Activated T-helper 1 cell treated with anti-CD3 and anti-CD28 coated beads, Interleukin-12 subunit alpha, Interleukin-12 subunit beta, Interleukin-2, Interleukin-4 antibody, amounts not matched to agents 30 ng/mL and 10 ng/mL and 1 ng/mL, durations not matched to agents 14 hours and 24 hours and 36 hours (primary cell): ENCODE measurements at regions of chr10 and their contacts with region 1.

Region 1: GRCh38 chr10:88901206-88901983 is 21.4 kb downstream of the STAMBPL1 start:
- DNase-seq: no peak
- H3K4me3 Mint-ChIP-seq: peak overlapping the region; percentile 73
- H3K27ac Mint-ChIP-seq: peak overlapping the region; percentile 89
- H3K4me1 Mint-ChIP-seq: peaks cover 68% of the 10 kb centered on the region
- H3K27me3 Mint-ChIP-seq: no peaks in the 10 kb centered on the region

Region 2: DNA sequence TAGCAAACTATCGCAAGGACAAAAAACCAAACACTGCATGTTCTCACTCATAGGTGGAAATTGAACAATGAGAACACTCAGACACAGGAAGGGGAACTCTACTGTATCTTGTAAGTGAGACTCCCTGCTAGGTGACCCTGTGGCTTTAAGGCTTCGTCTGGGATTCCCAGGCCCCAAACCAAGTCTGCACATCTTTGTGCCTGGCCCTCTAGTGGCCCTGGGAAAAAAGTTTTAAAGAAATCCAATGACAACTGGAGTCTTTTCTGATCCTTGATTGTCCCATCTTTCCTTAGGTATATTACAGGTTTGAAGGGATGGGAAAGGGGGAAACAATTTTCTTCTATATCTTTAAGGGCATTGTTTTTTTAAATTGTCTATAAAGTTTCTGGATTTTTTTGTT is 109.5 kb before region 1 on chr10:
- intact Hi-C with region 1: loop called (anchors 1 kb)
- DNase-seq: no peak
- H3K4me3 Mint-ChIP-seq: no peak overlapping the region
- H3K27ac Mint-ChIP-seq: no peak overlapping the region
- H3K4me1 Mint-ChIP-seq: peaks cover 25% of the 10 kb centered on the region
- H3K27me3 Mint-ChIP-seq: peaks cover 16% of the 10 kb centered on the region

Region 3: DNA sequence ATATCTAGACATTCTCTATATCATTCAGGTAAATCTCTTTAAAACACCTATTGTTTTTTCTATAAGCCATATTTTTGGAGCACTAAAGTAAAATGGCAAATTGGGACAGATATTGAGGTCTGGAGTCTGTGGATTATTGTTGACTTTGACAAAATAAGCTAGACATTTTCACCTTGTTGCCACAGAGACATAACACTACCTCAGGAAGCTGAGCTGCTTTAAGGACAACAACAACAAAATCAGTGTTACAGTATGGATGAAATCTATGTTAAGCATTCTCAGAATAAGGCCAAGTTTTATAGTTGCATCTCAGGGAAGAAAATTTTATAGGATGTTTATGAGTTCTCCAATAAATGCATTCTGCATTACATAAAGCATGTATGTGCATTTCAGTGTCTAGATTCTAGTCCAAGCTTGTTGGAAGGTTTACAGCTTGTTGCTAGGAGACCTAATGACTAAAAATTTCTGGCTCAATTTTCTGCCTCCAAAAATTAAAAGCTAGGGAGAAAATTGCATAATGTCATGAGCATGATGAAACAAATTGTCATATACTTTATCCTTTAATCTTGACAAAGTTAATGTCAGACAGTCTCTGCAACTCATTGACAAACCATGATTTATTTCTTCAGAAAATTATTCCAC is 80.5 kb before region 1 on chr10:
- intact Hi-C with region 1: loop called (anchors 2 kb)
- DNase-seq: no peak
- H3K4me3 Mint-ChIP-seq: no peak overlapping the region
- H3K27ac Mint-ChIP-seq: no peak overlapping the region
- H3K4me1 Mint-ChIP-seq: peaks cover 51% of the 10 kb centered on the region
- H3K27me3 Mint-ChIP-seq: peaks cover 7% of the 10 kb centered on the region

Region 4: GRCh38 chr10:88835096-88835909 is 66.1 kb before region 1 on chr10:
- intact Hi-C with region 1: loop called (anchors 1 kb)
- DNase-seq: peak; percentile 81
- H3K4me3 Mint-ChIP-seq: no peak overlapping the region
- H3K27ac Mint-ChIP-seq: no peak overlapping the region
- H3K4me1 Mint-ChIP-seq: peaks cover 33% of the 10 kb centered on the region
- H3K27me3 Mint-ChIP-seq: no peaks in the 10 kb centered on the region

Region 5: GRCh38 chr10:88848499-88848898 is 52.9 kb before region 1 on chr10:
- intact Hi-C with region 1: loop called (anchors 1 kb)
- DNase-seq: no peak
- H3K4me3 Mint-ChIP-seq: peak overlapping the region; percentile 0
- H3K27ac Mint-ChIP-seq: peak overlapping the region; percentile 45
- H3K4me1 Mint-ChIP-seq: peaks cover 28% of the 10 kb centered on the region
- H3K27me3 Mint-ChIP-seq: peaks cover 4% of the 10 kb centered on the region

Region 6: DNA sequence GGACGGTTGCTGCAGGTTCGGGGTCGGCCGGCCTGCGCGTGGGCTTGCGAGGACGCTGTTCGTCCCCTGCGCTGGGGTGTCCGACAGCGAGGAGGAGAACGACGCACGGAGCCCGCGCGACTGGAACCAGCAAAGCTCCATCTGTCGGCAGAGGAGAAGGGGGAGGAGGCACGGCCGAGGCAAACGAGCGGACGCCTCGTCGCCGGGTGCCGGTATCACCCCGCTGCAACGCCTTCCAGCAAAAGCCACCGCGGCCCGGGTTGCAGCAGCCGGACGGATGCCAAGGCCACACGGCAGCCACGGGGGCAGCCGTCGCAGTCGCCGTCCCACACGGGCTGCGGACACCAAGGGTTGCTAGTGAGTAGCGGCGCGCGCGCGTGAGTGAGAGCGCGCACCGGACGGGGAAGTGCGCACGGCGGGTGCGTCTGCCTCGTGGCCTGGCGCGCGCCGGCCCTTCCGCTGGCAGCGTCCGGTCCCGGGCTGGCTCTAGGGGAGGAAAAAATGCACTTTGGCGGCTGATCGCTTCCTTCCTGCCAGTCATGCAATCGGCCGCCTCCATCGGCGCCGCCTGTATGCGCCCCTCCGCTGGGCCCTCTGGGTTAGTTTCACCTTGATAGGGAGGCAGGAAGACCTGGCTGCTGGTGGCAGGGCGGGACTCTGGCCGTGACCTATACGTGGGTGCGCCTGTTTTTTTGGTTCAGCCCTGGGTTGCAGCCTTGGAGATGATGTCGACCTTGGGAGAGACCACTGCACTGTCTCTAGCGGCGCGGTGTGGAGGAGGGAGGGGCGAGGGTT is 20.9 kb before region 1 on chr10:
- intact Hi-C with region 1: loop called (anchors 1 kb)
- DNase-seq: peak; percentile 68
- H3K4me3 Mint-ChIP-seq: peak overlapping the region; percentile 98
- H3K27ac Mint-ChIP-seq: peak overlapping the region; percentile 99
- H3K4me1 Mint-ChIP-seq: peaks cover 74% of the 10 kb centered on the region
- H3K27me3 Mint-ChIP-seq: no peaks in the 10 kb centered on the region

Region 7: DNA sequence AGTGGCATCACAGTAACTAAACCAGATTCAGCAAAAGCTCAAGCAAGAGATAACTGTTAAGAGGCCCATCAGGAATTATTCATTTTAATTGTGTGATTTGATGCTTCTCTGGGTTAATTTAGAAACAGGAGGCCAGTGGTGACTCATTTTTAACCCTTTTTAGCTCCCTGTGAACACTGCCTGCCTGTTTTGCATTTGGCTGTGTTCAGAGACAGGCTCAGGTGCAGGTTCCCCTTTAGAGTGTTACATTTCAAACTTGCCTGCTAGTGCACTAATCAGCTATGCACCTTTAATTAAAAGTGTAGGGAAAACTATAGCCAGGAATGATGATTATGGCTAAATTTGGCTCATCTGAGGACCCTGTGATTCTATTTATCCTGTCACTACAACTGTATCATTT is 14.8 kb before region 1 on chr10:
- intact Hi-C with region 1: loop called (anchors 1 kb)
- DNase-seq: no peak
- H3K4me3 Mint-ChIP-seq: no peak overlapping the region
- H3K27ac Mint-ChIP-seq: no peak overlapping the region
- H3K4me1 Mint-ChIP-seq: peaks cover 87% of the 10 kb centered on the region
- H3K27me3 Mint-ChIP-seq: no peaks in the 10 kb centered on the region

Region 8: GRCh38 chr10:88996927-88997326 is 95.5 kb after region 1 on chr10:
- intact Hi-C with region 1: no loop called
- DNase-seq: no peak
- H3K4me3 Mint-ChIP-seq: no peak overlapping the region
- H3K27ac Mint-ChIP-seq: no peak overlapping the region
- H3K4me1 Mint-ChIP-seq: peaks cover 91% of the 10 kb centered on the region
- H3K27me3 Mint-ChIP-seq: no peaks in the 10 kb centered on the region